Panc1 (cell line): ENCODE measurements at regions of chr16 and their contacts with region 1.

Region 1: GRCh38 chr16:48611329-48612137 is 1.6 kb upstream of the N4BP1 start:
- DNase-seq: no peak
- ATAC-seq: no peak
- H3K4me3 ChIP-seq: no peak overlapping the region
- H3K27ac ChIP-seq: 0 out of 2 replicates have a peak overlapping the region, but pooled peaks have one; percentile 93
- H3K4me1 ChIP-seq: peaks cover 7% of the 10 kb centered on the region; the same call in 1 of the 2 replicates
- H3K27me3 ChIP-seq: no peaks in the 10 kb centered on the region
- CTCF ChIP-seq: no peak

Region 2: DNA sequence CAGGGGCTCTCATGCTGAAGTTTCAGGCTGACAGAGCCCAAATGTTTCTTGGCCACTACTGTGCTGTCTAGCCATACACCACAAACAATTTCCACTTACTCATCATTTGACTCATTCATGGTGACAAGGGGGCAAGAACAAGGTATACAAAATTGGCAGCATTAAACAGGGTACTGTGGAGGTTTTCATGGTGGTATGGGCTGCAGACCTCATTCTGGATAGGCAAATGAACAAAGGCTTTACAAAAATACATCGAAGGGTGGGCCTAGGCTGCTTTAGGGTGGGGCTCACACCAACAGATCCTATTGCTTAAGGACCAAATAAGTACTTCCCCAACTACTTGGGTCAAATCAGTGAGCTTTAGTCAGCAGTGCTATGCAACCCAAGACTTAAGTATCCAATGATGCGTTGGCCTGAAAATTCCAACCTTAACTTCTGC is 54.6 kb before region 1 on chr16:
- CTCF ChIA-PET with region 1: no interaction called
- POLR2A ChIA-PET with region 1: no interaction called
- in situ Hi-C with region 1: no loop called
- intact Hi-C with region 1: no loop called
- DNase-seq: peak; percentile 45
- ATAC-seq: no peak
- H3K4me3 ChIP-seq: no peak overlapping the region
- H3K27ac ChIP-seq: no peak overlapping the region
- H3K4me1 ChIP-seq: 0 out of 2 replicates have a peak, but pooled peaks cover 2% of the 10 kb centered on the region
- H3K27me3 ChIP-seq: no peaks in the 10 kb centered on the region
- CTCF ChIP-seq: no peak

Region 3: GRCh38 chr16:48623304-48624016 is 11.9 kb after region 1 on chr16:
- CTCF ChIA-PET with region 1: interaction called, 11 read pairs
- POLR2A ChIA-PET with region 1: interaction called, 3 read pairs
- in situ Hi-C with region 1: no loop called
- intact Hi-C with region 1: no loop called
- DNase-seq: peak; percentile 41
- ATAC-seq: peak; percentile 100
- H3K4me3 ChIP-seq: peak overlapping the region; percentile 32 to 42
- H3K27ac ChIP-seq: no peak overlapping the region
- H3K4me1 ChIP-seq: no peaks in the 10 kb centered on the region
- H3K27me3 ChIP-seq: no peaks in the 10 kb centered on the region
- CTCF ChIP-seq: peak; percentile 96

Region 4: GRCh38 chr16:48860341-48860740 is 248.8 kb after region 1 on chr16:
- CTCF ChIA-PET with region 1: no interaction called
- POLR2A ChIA-PET with region 1: no interaction called
- in situ Hi-C with region 1: no loop called
- intact Hi-C with region 1: no loop called
- DNase-seq: no peak
- ATAC-seq: no peak
- H3K4me3 ChIP-seq: no peak overlapping the region
- H3K27ac ChIP-seq: no peak overlapping the region
- H3K4me1 ChIP-seq: no peaks in the 10 kb centered on the region
- H3K27me3 ChIP-seq: no peaks in the 10 kb centered on the region
- CTCF ChIP-seq: no peak